Left lung (tissue), 14 donors: ENCODE measurements at regions of chr14 and their contacts with region 1.

Region 1: DNA sequence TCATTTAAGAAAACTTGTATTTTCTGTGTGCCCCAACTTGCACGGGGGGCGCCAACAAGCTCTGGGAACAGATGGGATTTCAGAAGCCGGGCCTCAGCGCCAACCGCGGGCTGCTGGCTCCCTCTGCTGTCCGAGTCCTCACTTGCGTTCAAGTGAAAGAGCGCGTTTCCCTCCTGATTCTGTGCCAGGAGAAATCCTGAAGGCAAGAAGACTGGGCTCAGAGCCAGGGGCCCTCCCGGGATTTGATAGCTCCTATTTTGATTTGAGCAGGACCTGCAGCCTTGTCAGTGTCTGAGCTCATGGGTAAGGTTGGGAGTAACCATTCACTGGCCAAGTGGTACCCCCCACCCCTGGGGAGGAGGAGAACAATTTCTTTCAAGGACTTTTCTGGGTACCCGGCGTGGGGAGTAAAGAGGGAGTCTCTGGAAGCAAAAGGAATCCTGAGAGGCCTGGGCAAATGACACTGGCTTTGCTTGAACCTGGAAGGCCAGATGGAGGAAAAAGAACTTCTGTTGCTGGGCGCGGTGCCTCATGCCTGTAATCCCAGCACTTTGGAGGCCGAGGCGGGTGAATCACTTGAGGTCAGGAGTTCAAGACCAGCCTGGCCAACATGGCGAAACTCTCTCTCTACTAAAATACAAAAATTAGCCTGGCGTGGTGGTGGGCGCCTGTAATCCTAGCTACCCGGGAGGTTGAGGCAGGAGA is 179.0 kb upstream of the RGS6 start:
- DNase-seq: peak; percentile 83 to 95 (median 92)
- ATAC-seq: peak; percentile 96
- H3K4me3 ChIP-seq: no peak overlapping the region
- H3K27ac ChIP-seq: no peak overlapping the region
- H3K4me1 ChIP-seq: peaks cover 0 to 8% of the 10 kb centered on the region in 2 donors
- H3K27me3 ChIP-seq: no peaks in the 10 kb centered on the region
- CTCF ChIP-seq: peak; percentile 84 to 88

Region 2: DNA sequence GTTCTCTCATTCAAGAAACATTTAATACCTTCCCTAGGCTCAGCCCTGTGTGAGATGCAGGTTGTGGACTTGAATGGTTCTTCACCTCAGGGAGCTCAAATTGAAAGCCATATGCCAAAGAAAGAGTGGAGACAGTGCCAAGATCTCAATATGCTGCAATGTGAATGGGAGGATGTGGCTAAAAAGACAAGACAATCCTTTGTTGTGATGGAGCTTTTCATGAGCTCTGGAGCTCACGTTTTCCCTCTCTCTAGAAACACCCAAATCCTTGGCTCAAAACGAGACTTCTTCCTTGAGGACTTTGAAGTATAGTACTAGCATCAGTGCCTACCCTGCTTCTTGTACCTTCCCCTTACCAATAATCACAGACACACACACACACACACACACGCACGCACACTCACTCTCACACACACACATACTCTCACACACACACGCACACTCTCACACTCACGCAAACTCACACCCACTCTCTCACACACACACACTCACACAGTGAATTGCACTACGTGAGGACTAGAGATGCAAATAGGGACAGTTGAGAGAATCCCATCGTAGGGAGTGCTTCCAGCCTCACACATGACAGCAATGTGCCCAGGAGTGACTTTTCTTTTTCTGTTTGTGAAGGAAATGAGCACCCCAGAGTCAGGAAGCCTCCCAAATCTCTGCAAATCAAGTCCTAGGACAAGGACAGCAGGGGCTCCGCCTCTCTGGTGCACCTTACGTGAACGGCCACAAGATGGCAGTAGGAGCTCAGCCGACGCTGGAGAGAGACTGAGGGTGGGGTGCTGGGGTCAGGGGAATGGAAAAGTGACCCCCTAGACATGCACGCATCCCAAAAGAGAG is 614.6 kb before region 1 on chr14:
- intact Hi-C with region 1: loop called in 1 of 2 experiments (anchors 5 kb)
- DNase-seq: peak; percentile 38 to 83 (median 57)
- ATAC-seq: peak; percentile 89
- H3K4me3 ChIP-seq: no peak overlapping the region
- H3K27ac ChIP-seq: no peak overlapping the region
- H3K4me1 ChIP-seq: peaks cover 0 to 34% of the 10 kb centered on the region in 2 donors
- H3K27me3 ChIP-seq: no peaks in the 10 kb centered on the region
- CTCF ChIP-seq: peak; percentile 94 to 95